HepG2 (cell line): ENCODE measurements at regions of chr15 and their contacts with region 1.

Region 1: GRCh38 chr15:68252925-68253534 is 23.5 kb upstream of the CLN6 start:
- DNase-seq: peak; percentile 72
- ATAC-seq: peak; percentile 61
- H3K4me3 ChIP-seq: no peak overlapping the region; a peak in 1 of 6 replicates
- H3K27ac ChIP-seq: no peak overlapping the region
- H3K4me1 ChIP-seq: peaks cover 7% of the 10 kb centered on the region
- H3K27me3 ChIP-seq: 0 out of 5 replicates have a peak, but pooled peaks cover 0 to 6% of the 10 kb centered on the region in 2 experiments
- CTCF ChIP-seq: peak; percentile 86
- EP300 ChIP-seq: no peak
- POLR2A ChIP-seq: no peak
- RAD21 ChIP-seq: peak; percentile 81

Region 2: DNA sequence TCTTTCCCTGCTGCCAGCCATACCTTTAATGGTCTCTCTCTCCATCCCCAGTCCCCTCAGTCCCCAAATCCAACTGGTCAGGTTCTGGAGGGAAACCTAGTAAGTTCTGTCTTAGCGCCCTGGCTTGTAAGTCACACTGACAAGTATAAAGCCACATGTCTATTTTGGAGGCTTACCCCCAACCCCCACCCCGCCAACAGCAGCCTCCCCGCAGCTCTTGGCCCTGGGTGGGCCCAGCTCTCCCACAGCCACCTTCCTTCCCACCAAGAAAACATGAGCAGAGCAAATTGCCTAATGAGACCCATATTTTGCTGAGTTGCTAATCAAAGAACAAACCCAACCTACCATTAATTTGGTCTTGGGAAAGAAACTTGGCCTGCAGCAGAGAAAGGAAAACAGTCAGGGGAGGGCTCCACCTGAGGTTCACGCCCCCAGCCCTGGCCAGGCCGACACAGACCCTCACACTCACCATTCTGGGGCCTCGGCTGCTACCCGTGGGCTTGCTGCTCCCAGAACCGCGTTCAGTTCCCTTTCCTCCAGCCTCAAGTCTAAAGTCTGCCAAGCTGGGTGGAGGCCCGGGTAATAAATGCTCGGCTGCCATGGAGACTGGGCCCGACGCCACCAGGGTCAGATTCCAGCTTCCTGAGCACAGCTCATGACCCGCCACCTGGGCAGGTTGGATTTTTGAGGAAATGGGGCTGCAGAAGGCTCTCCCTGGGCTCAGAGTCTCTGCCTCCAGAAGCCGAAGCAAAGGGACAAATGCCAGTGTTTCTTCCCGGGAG is 48.1 kb before region 1 on chr15 and contains the start of gene CALML4:
- CTCF ChIA-PET with region 1: no interaction called
- POLR2A ChIA-PET with region 1: no interaction called
- in situ Hi-C with region 1: no loop called
- intact Hi-C with region 1: no loop called
- DNase-seq: peak; percentile 74
- ATAC-seq: peak; percentile 91
- H3K4me3 ChIP-seq: peak within 1 kb of the TSS in 2 of 3 experiments; percentile 43 to 50; a peak in 3 of 6 replicates
- H3K27ac ChIP-seq: peak within 1 kb of the TSS; percentile 81
- H3K4me1 ChIP-seq: peaks cover 49% of the 10 kb centered on the region
- H3K27me3 ChIP-seq: no peaks in the 10 kb centered on the region
- CTCF ChIP-seq: 0 out of 2 replicates have a peak, but pooled peaks have one; percentile 14
- EP300 ChIP-seq: no peak
- POLR2A ChIP-seq: no peak
- RAD21 ChIP-seq: no peak
- total RNA-seq, gene CALML4: 6.5 and 8.7 TPM in 2 replicates

Region 3: DNA sequence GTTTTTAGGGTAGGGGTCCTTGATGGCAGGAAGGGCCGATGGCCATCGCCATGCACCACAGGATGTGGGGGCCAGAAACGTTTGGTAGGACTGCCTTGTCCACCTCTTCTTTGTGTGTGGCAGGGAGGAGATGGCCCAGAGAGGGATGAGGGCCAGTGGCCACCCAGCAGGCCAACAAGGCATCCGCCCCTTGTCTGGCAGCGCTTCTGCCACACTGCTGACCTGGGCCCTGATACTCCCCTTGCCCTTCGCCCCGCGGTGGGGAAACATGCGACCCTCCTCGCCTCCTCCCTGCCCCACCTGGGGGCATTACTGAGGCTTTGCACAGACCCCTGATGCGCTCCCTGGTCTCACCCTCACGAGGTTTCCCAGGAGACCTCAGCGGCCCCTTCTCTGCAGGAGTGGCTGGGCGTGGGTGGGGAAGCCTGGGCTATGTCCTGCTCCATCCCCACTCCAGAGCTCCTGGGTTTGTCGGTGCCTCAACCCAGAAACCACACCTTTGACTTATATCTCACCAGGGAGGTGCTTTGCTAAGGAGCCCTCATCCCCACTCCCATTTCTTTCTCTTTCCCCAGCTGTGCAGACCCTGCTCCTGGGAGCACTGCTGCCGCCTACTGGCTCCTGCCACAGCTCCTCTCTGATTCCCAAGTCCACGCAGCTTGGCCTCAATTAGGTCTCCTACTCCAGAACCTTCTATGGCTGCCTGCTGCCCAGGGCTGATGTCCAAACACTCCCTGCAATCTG is 63.2 kb after region 1 on chr15:
- CTCF ChIA-PET with region 1: interaction called, 12 read pairs
- POLR2A ChIA-PET with region 1: no interaction called
- in situ Hi-C with region 1: no loop called
- intact Hi-C with region 1: no loop called
- DNase-seq: no peak
- ATAC-seq: peak; percentile 66
- H3K4me3 ChIP-seq: no peak overlapping the region
- H3K27ac ChIP-seq: no peak overlapping the region
- H3K4me1 ChIP-seq: peaks cover 9% of the 10 kb centered on the region
- H3K27me3 ChIP-seq: peaks cover 7 to 29% of the 10 kb centered on the region in 2 experiments
- CTCF ChIP-seq: peak; percentile 77
- EP300 ChIP-seq: no peak
- POLR2A ChIP-seq: no peak
- RAD21 ChIP-seq: no peak

Region 4: GRCh38 chr15:68383161-68384074 is 130.4 kb after region 1 on chr15:
- CTCF ChIA-PET with region 1: interaction called, 11 read pairs
- POLR2A ChIA-PET with region 1: no interaction called
- in situ Hi-C with region 1: loop called (anchors 5 kb)
- intact Hi-C with region 1: loop called (anchors 1 kb)
- DNase-seq: peak; percentile 39
- ATAC-seq: 0 out of 3 replicates have a peak, but pooled peaks have one; percentile 41
- H3K4me3 ChIP-seq: no peak overlapping the region
- H3K27ac ChIP-seq: no peak overlapping the region
- H3K4me1 ChIP-seq: peaks cover 10% of the 10 kb centered on the region
- H3K27me3 ChIP-seq: peaks cover 12 to 25% of the 10 kb centered on the region in 2 experiments; a peak in 4 of 5 replicates
- CTCF ChIP-seq: peak; percentile 64
- EP300 ChIP-seq: no peak
- POLR2A ChIP-seq: no peak
- RAD21 ChIP-seq: 0 out of 2 replicates have a peak, but pooled peaks have one; percentile 16